Sigmoid colon (tissue), 7 donors: ENCODE measurements at regions of chr2 and their contacts with region 1.

Region 1: DNA sequence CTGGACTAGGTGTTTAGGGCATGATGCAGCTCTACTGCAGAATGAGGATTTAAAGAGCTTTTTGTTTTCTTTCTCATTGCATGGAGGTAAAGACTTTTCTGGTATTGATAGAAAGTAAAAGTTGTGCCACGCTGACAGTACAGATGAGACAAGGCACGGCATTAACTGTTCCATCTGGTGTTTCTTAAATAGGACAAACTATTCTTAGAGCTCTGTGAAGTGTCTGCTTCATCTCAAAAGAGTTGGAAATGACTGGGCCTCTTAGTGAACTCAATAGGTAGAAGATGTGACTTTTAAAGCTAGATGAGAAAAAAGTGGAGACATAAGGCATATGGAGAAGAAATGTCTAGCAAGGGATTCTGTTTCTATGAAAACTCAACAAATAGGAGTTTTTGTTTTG is 321.8 kb downstream of the RPRM start:
- DNase-seq: no peak
- H3K4me3 ChIP-seq: no peak overlapping the region
- H3K27ac ChIP-seq: peak overlapping the region in 3 of 4 donors; percentile 34 to 66 (median 59)
- H3K4me1 ChIP-seq: peaks cover 0 to 31% (median 9%) of the 10 kb centered on the region in 4 donors
- H3K27me3 ChIP-seq: no peaks in the 10 kb centered on the region
- CTCF ChIP-seq: no peak
- EP300 ChIP-seq: peak in 3 of 4 donors; percentile 41 to 79 (median 62)
- POLR2A ChIP-seq: no peak

Region 2: DNA sequence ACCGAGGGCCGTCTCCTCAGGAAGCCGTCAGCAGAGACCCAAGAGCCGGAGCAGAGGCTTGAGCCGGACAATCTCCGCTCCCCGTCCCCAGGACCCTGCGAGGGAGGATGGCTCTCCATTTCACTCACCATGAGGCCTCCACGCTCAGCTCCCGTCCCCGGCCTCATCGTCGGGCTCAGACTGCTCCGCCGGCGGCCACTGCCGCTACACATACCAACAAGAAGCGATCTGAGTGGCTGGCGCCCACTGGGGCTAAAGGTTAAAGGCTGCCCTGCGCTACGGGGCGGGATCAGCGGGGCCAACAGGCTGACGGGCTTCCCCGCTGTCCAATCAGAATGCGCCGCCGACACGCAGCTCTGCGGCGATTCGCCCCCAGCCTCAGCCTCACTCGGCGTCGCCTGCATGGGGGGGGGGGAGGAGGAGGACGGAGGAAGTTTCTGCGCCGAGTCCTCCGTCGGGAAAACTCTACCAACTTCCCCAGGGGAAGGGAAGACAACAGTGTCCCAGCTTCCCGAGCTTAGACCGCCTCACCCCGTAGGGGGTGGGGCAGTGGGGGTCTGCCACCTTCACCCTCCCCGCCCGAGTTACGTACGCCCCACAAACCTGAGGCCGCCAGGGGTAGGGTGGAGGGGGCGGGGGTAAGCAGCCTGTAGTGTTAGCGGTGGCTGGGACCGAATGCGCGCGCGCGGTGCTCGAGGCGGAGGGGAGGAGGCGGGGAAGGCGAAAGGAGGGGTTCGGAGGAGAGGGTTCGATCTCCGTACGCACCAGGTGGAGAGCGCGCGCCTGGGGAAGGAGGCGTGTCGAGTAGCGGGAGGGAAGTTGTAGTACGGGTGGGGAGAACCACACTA is 439.3 kb before region 1 on chr2 and contains the start of gene PRPF40A:
- intact Hi-C with region 1: loop called (anchors 10 kb)
- DNase-seq: peak; percentile 99
- H3K4me3 ChIP-seq: peak within 1 kb of the TSS; percentile 87 to 94 (median 94)
- H3K27ac ChIP-seq: peak within 1 kb of the TSS; percentile 96 to 98 (median 97)
- H3K4me1 ChIP-seq: peaks cover 0 to 47% (median 36%) of the 10 kb centered on the region in 4 donors
- H3K27me3 ChIP-seq: no peaks in the 10 kb centered on the region
- CTCF ChIP-seq: no peak
- EP300 ChIP-seq: no peak
- POLR2A ChIP-seq: peak; percentile 76 to 85
- total RNA-seq, gene PRPF40A: 69.2 to 200 (median 80.7) TPM

Region 3: GRCh38 chr2:152762202-152762601 is 394.5 kb before region 1 on chr2:
- intact Hi-C with region 1: no loop called
- DNase-seq: no peak
- H3K4me3 ChIP-seq: no peak overlapping the region
- H3K27ac ChIP-seq: no peak overlapping the region
- H3K4me1 ChIP-seq: peaks cover 0 to 9% (median 3%) of the 10 kb centered on the region in 4 donors
- H3K27me3 ChIP-seq: no peaks in the 10 kb centered on the region
- CTCF ChIP-seq: no peak
- EP300 ChIP-seq: no peak
- POLR2A ChIP-seq: no peak

Region 4: DNA sequence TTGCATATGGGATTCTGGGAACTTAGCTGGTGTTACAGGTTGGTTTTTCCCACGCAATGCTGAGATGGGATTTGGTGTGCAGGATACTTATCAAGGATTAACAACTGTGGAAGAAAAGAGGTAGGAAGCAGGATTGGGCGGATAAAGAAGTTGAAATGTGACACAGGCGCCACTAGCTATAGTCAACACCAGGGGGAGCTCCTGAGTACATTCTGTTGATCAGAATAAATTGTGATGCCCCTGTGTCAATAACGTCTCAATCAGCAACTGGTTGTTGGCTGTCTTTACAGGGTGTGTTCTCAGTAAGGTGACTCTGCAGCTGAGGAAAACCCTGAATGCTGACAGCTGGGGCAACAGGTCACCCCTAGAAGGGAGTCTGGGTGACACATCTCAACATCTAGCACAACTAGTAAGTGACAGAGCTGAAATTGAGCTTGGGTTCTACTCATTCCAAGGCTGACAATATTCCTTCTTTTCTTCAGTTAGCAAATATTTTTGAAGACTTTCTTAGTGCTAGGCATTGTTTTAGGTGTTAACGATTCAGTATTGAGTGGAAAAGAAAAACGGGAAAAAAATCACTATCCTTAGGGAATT is 295.3 kb before region 1 on chr2:
- intact Hi-C with region 1: loop called (anchors 5 kb)
- DNase-seq: no peak
- H3K4me3 ChIP-seq: no peak overlapping the region
- H3K27ac ChIP-seq: no peak overlapping the region
- H3K4me1 ChIP-seq: no peaks in the 10 kb centered on the region
- H3K27me3 ChIP-seq: no peaks in the 10 kb centered on the region
- CTCF ChIP-seq: peak; percentile 10 to 69 (median 42)
- EP300 ChIP-seq: no peak
- POLR2A ChIP-seq: no peak

Region 5: GRCh38 chr2:152925547-152926327 is 231.0 kb before region 1 on chr2:
- intact Hi-C with region 1: loop called (anchors 2 kb)
- DNase-seq: peak; percentile 84
- H3K4me3 ChIP-seq: no peak overlapping the region
- H3K27ac ChIP-seq: no peak overlapping the region
- H3K4me1 ChIP-seq: peaks cover 0 to 16% (median 0%) of the 10 kb centered on the region in 4 donors
- H3K27me3 ChIP-seq: no peaks in the 10 kb centered on the region
- CTCF ChIP-seq: peak; percentile 53 to 69 (median 58)
- EP300 ChIP-seq: no peak
- POLR2A ChIP-seq: no peak

Region 6: DNA sequence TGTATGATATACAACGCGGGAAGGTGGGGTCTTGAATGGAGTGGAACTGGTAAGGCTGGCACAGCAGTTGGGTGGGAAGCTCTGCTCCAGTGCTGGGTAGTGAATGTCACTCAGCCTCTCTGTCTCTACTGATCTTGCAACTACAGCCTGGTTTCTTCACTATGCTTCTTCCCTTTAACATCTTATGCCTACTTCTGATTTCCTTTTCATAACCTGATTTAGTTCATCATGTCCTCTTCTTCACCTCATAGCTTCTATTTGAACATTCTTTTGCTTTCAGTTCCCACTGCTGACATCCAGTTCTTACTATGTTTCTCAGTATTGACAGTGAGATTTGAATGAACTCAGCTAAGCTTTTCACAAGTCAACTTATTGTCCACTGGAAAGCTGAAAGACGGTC is 152.1 kb before region 1 on chr2:
- intact Hi-C with region 1: no loop called
- DNase-seq: no peak
- H3K4me3 ChIP-seq: no peak overlapping the region
- H3K27ac ChIP-seq: no peak overlapping the region
- H3K4me1 ChIP-seq: no peaks in the 10 kb centered on the region
- H3K27me3 ChIP-seq: no peaks in the 10 kb centered on the region
- CTCF ChIP-seq: no peak
- EP300 ChIP-seq: no peak
- POLR2A ChIP-seq: no peak

Region 7: DNA sequence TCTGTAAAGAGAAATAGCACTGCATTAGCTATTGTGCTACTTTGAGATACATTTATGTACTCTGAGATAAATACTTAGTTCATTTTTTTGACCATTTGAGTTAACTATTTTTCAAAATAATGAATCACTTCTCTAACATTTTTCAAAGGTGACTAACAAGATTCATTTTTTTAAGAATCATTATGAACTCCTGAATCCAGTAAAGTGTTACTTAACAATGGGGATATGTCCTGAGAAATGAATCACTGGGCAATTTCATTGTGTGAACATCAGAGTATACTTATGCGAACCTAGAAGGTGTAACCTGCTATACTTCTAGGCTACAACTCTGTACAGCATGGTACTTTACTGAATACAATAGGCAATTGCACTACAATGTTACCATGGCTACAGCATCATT is 82.5 kb before region 1 on chr2:
- intact Hi-C with region 1: loop called (anchors 5 kb)
- DNase-seq: no peak
- H3K4me3 ChIP-seq: no peak overlapping the region
- H3K27ac ChIP-seq: no peak overlapping the region
- H3K4me1 ChIP-seq: peaks cover 0 to 26% (median 23%) of the 10 kb centered on the region in 4 donors
- H3K27me3 ChIP-seq: no peaks in the 10 kb centered on the region
- CTCF ChIP-seq: no peak
- EP300 ChIP-seq: no peak
- POLR2A ChIP-seq: no peak

Region 8: DNA sequence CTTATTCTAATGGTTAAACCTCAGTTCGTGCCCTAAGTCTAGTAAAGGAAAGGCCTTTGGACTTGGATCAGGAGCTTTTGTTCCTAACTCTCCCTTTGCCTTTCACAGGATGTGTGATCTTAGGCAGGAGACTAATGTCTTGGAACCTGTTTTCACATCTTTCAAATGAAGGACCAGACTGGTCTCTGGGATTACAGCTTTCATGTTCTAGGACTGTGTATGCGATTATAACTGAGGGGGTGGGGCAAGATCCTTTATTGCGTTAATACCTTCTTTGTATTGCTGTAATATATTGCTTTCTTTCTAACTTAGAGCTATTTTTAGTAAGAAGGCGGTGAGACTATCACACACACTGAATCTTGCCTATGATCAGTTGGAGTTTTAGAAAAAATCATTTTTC is 46.3 kb before region 1 on chr2:
- intact Hi-C with region 1: loop called (anchors 5 kb)
- DNase-seq: no peak
- H3K4me3 ChIP-seq: no peak overlapping the region
- H3K27ac ChIP-seq: peak overlapping the region in 3 of 4 donors; percentile 35 to 63 (median 36)
- H3K4me1 ChIP-seq: peaks cover 0 to 47% (median 36%) of the 10 kb centered on the region in 4 donors
- H3K27me3 ChIP-seq: no peaks in the 10 kb centered on the region
- CTCF ChIP-seq: no peak
- EP300 ChIP-seq: no peak
- POLR2A ChIP-seq: no peak